CD4-positive, alpha-beta T cell (primary cell): ENCODE measurements at regions of chr13 and their contacts with region 1.

Region 1: DNA sequence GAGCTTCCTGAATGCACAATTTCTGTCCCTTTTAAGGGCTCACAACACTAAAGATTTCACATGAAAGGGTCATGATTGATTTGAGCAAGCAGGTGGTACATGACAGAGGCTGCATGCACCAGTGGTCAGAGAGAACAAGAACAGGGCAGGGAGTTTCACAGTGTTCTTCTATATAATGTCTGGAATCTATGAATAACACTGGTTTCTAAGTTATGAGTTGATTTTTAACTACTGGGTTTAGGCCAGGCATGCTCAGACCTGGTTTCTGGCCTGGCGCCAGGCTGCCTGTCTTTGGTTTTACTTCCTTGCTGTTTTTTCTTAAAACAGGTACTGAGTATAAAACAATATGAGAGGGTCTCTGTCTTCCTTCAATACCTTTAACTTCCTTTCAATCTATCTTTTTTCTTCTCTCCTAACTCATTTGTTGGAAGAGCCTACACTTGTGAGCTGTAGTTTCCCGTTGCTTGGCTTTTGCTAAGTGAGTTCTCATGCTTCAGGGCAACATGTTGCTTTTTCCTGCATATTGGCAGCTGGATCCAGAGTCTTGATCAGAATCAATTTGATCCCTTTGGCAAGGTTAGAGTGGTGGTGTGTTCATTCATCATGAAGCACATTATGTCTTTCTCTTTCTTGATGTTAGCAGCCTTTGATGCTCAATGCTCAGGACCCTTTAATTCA is 38.5 kb upstream of the FGF14 start:
- DNase-seq: no peak
- ATAC-seq: no peak
- H3K4me3 ChIP-seq: no peak overlapping the region
- H3K4me3 Mint-ChIP-seq: no peak overlapping the region
- H3K27ac ChIP-seq: no peak overlapping the region
- H3K27ac Mint-ChIP-seq: no peak overlapping the region
- H3K4me1 ChIP-seq: no peaks in the 10 kb centered on the region
- H3K4me1 Mint-ChIP-seq: no peaks in the 10 kb centered on the region
- H3K27me3 ChIP-seq: peaks cover 5 to 7% of the 10 kb centered on the region in 2 experiments
- H3K27me3 Mint-ChIP-seq: peaks cover 51% of the 10 kb centered on the region
- CTCF ChIP-seq: no peak

Region 2: DNA sequence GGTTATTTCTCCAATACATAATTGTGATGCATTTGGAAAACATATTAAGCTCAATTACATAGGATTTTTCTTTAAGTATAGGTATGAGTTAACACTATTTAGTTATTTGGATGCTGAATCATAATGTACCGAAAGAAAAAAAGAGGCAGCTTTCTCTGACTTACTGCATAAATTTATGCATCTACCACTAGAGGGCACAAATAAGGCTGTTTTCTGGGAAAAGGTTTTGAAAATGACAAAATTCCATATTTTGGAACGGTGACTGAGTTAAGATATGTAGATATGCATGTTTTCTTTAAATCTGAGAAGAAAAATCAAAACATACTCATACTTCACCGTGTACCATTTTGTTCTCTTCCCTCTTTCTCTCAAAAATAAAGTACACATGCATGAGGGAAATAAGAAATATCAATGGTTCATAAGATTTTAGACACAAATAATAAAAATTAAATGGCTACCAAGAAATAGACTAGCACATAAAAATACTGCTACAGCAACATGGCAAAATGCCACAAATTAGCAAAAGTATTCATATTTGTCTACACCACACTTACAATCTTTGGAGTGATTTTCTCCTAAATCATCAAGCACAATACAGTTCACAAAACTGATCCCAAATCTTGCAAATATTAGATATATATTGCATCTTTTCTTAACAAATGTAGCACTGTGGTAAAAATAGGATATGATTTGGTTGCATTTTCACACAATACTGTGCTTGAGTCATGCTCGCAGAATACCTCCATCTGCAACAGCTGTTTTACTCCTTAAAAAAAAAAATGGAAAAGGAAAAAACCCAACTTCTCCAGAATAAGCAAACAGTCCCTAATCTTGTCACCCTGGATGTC is 298.5 kb before region 1 on chr13:
- CTCF ChIA-PET with region 1: no interaction called
- POLR2A ChIA-PET with region 1: no interaction called
- intact Hi-C with region 1: loop called in 1 of 2 experiments (anchors 5 kb)
- DNase-seq: no peak
- ATAC-seq: no peak
- H3K4me3 ChIP-seq: no peak overlapping the region
- H3K4me3 Mint-ChIP-seq: no peak overlapping the region
- H3K27ac ChIP-seq: no peak overlapping the region
- H3K27ac Mint-ChIP-seq: no peak overlapping the region
- H3K4me1 ChIP-seq: no peaks in the 10 kb centered on the region
- H3K4me1 Mint-ChIP-seq: no peaks in the 10 kb centered on the region
- H3K27me3 ChIP-seq: peaks cover 0 to 3% of the 10 kb centered on the region in 2 experiments
- H3K27me3 Mint-ChIP-seq: no peaks in the 10 kb centered on the region
- CTCF ChIP-seq: peak; percentile 51